IMR-90 (cell line): ENCODE measurements at regions of chr19 and their contacts with region 1.

Region 1: DNA sequence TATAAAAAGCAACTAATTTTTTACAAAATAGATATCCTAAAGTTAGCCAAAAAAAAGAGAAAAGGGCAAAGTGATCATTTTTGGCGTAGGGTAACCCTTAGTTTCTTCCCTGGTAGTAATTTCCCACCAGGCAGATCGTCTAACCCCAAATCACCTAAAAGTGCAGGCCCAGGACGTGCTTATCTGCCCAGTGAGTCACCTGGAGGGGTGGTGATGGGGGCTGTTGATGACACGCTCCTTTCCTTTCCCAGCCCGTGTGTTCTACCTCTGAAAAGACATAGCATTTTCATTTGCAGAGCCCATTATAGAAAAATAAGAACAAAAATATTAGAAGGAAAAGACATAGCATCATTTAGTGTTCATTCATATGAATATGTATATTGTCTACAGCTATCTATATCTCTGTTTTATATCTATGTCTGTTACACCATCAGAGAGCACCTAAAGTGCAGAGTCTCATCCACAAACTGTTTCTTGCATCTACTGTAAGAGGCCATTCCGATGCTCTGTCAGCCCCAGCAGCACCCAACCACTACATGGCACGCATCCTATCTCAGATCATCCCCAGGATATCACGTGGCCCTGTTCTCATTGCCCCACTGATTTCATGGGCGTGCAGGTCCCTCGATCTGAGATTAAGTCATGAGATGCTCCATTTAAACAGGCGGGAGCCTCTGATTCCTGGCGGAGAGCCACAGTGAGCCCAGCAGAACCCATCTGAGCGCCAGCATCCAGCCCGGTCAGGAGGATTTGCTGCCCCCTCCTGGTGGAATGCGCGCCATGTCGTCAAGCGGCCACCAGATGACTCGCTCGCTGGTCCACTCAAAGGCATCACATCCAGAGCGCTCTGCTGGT is 8.5 kb upstream of the LILRB3 start:
- DNase-seq: peak; percentile 73
- ATAC-seq: peak; percentile 100
- H3K4me3 ChIP-seq: no peak overlapping the region
- H3K27ac ChIP-seq: no peak overlapping the region
- H3K4me1 ChIP-seq: no peaks in the 10 kb centered on the region
- H3K27me3 ChIP-seq: peaks cover 4% of the 10 kb centered on the region
- CTCF ChIP-seq: peak; percentile 96
- POLR2A ChIP-seq: no peak
- RAD21 ChIP-seq: peak; percentile 94

Region 2: GRCh38 chr19:54041969-54042606 is 189.2 kb before region 1 on chr19:
- CTCF ChIA-PET with region 1: no interaction called
- POLR2A ChIA-PET with region 1: no interaction called
- dilution Hi-C with region 1: no loop called
- in situ Hi-C with region 1: no loop called
- intact Hi-C with region 1: no loop called
- DNase-seq: no peak
- ATAC-seq: no peak
- H3K4me3 ChIP-seq: no peak overlapping the region
- H3K27ac ChIP-seq: no peak overlapping the region
- H3K4me1 ChIP-seq: no peaks in the 10 kb centered on the region
- H3K27me3 ChIP-seq: no peaks in the 10 kb centered on the region
- CTCF ChIP-seq: no peak
- POLR2A ChIP-seq: no peak
- RAD21 ChIP-seq: no peak

Region 3: DNA sequence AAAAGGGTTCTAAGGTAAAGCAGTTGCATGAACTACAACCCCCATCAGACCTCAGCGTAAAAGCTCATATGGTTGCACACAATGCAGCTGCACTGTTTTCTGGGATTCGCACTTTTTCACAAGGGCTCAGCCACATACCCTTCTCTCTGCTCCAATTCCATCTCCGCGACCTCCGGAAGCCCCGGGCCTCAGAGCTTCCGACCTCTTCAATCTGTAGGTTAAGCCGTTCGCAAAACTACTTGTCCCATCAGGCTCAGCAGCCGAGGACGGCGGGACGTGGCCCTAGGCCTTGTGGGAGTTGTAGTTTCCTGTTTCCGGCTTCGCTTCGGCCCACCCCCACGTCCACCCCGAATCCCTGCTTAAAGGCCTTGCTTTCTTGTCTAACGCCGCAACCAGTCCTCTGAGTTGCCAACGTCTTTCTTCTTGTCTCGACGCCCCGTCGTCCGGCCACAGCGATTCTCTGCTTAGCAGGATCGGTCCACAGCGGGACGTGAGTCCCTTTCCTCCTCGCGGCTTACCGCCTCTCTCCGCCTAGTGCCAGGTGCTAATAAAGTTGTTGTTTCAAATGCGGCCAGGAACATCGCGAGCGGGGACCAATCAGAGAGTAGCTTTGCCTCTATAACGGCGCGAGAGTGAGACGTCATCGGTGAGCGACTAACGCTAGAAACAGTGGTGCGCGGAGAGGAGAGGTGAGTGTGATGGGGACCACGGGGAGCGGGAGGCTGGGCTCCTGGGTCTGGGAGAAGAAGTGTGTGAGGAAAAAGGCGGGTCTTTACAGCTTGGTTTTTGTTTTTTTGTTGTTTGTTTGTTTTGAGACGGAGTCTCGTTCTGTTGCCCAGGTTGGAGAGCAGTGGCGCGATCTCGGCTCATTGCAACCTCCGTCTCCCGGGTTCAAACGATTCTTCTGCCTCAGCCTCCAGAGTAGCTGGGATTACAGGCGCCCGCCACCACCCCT is 115.9 kb before region 1 on chr19 and contains the starts of genes PRPF31 and TFPT:
- CTCF ChIA-PET with region 1: no interaction called
- POLR2A ChIA-PET with region 1: no interaction called
- dilution Hi-C with region 1: no loop called
- in situ Hi-C with region 1: no loop called
- intact Hi-C with region 1: loop called (anchors 1 kb)
- DNase-seq: peak; percentile 98
- ATAC-seq: peak; percentile 97
- H3K4me3 ChIP-seq: peak within 1 kb of the TSS; percentile 61
- H3K27ac ChIP-seq: peak within 1 kb of the TSS; percentile 94
- H3K4me1 ChIP-seq: peaks cover 6% of the 10 kb centered on the region
- H3K27me3 ChIP-seq: no peaks in the 10 kb centered on the region
- CTCF ChIP-seq: no peak
- POLR2A ChIP-seq: peak; percentile 68; the same call in 1 of the 2 replicates
- RAD21 ChIP-seq: no peak
- total RNA-seq, gene PRPF31: 66.1 and 66.9 TPM in 2 replicates
- total RNA-seq, gene TFPT: 7.9 and 11.9 TPM in 2 replicates

Region 4: DNA sequence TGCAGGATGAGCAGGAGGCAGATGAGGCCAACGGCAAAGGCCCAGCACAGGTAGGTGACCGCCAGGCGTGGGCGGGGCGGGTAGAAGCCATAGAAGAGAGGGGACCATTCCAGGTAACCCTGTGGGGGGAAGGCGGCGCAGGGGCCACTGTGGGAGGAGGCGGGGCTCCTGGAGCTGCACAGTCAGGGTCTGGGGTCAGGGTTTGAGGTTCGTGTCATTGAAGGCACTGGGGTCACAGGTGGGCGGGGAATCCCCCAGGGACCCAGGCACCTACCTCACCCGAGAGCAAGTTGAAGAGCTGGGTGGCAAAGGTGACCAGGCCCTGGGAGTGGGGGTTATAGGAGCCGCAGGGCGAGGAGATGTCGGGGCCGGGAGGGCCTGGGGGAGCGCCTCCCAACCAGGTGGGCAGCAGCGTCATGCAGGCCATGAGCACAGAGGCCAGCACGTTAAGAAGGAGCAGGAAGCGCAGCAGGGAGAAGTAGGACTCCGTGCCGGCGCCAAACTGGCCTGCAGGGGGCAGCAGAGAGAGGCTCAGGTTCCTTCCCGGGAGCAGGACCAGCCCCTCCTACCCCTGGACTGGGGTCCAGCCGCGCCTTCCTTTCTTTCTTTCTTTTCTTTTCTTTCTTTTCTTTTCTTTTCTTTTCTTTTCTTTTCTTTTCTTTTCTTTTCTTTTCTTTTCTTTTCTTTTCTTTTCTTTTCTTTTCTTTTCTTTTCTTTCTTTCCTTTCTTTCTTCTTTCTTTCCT is 63.0 kb before region 1 on chr19:
- CTCF ChIA-PET with region 1: no interaction called
- POLR2A ChIA-PET with region 1: no interaction called
- dilution Hi-C with region 1: no loop called
- in situ Hi-C with region 1: no loop called
- intact Hi-C with region 1: loop called (anchors 1 kb)
- DNase-seq: peak; percentile 73
- ATAC-seq: peak; percentile 95
- H3K4me3 ChIP-seq: no peak overlapping the region
- H3K27ac ChIP-seq: no peak overlapping the region
- H3K4me1 ChIP-seq: no peaks in the 10 kb centered on the region
- H3K27me3 ChIP-seq: no peaks in the 10 kb centered on the region
- CTCF ChIP-seq: peak; percentile 84
- POLR2A ChIP-seq: no peak
- RAD21 ChIP-seq: peak; percentile 73

Region 5: GRCh38 chr19:54339646-54340358 is 108.5 kb after region 1 on chr19:
- CTCF ChIA-PET with region 1: no interaction called
- POLR2A ChIA-PET with region 1: no interaction called
- dilution Hi-C with region 1: no loop called
- in situ Hi-C with region 1: no loop called
- intact Hi-C with region 1: no loop called
- DNase-seq: no peak
- ATAC-seq: no peak
- H3K4me3 ChIP-seq: no peak overlapping the region
- H3K27ac ChIP-seq: no peak overlapping the region
- H3K4me1 ChIP-seq: no peaks in the 10 kb centered on the region
- H3K27me3 ChIP-seq: no peaks in the 10 kb centered on the region
- CTCF ChIP-seq: no peak
- POLR2A ChIP-seq: no peak
- RAD21 ChIP-seq: no peak